CD8-positive, alpha-beta T cell (primary cell): ENCODE measurements at regions of chr5 and their contacts with region 1.

Region 1: DNA sequence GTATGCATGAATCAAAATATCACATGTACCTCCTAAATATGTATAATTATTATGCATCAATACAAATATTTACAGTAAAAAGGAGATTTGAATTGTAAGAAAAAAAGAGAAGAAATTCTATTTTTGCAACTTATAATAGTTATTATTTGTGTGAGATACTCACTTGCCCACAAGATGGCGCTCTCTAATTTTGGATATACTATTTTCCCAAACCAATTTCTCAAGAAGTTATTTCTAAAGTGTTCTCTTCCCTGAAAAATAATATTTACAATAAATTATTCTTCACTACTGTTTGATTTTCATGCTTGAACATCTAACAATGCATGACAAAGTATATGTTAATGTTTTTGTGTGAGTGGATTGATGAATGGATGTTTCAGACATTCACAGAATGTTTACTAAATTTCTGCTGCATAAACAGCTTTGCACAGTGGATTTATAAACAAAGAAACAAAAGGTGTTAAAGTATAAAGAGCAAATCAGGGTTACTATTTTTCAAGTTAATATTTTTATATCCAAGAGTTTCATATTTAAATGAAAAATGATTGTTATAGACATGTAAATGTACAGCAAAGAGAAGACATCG is 503.4 kb downstream of the PDE4D start:
- DNase-seq: peak in 3 of 9 experiments; percentile 11 to 48 (median 23)
- ATAC-seq: no peak
- H3K4me3 ChIP-seq: no peak overlapping the region
- H3K4me3 Mint-ChIP-seq: no peak overlapping the region
- H3K27ac ChIP-seq: no peak overlapping the region
- H3K27ac Mint-ChIP-seq: no peak overlapping the region
- H3K4me1 ChIP-seq: no peaks in the 10 kb centered on the region
- H3K4me1 Mint-ChIP-seq: no peaks in the 10 kb centered on the region
- H3K27me3 ChIP-seq: no peaks in the 10 kb centered on the region
- H3K27me3 Mint-ChIP-seq: peaks cover 5% of the 10 kb centered on the region
- CTCF ChIP-seq: peak; percentile 81

Region 2: DNA sequence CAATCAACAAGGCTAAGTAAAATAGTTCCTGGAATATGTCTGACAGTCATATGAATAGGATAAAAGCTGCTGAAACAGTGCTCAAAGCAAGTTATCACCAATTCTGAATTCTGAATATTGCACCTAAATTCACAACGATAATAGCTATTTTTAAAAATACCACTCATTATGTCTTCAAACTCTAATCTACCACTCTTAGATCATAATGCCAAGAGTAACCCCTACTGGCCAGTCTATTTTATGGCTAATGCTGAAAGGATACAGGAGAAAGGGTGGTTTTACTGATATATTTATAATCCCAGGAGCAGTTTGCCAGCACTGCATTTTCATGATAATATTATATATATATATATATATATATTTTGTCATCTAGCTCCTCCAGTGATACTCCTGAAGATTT is 270.6 kb after region 1 on chr5:
- CTCF ChIA-PET with region 1: no interaction called
- POLR2A ChIA-PET with region 1: no interaction called
- intact Hi-C with region 1: loop called in 1 of 2 experiments (anchors 5 kb)
- DNase-seq: no peak
- ATAC-seq: no peak
- H3K4me3 ChIP-seq: no peak overlapping the region
- H3K4me3 Mint-ChIP-seq: no peak overlapping the region
- H3K27ac ChIP-seq: no peak overlapping the region
- H3K27ac Mint-ChIP-seq: no peak overlapping the region
- H3K4me1 ChIP-seq: no peaks in the 10 kb centered on the region
- H3K4me1 Mint-ChIP-seq: peaks cover 4% of the 10 kb centered on the region
- H3K27me3 ChIP-seq: no peaks in the 10 kb centered on the region
- H3K27me3 Mint-ChIP-seq: no peaks in the 10 kb centered on the region
- CTCF ChIP-seq: no peak